SK-N-SH (cell line): ENCODE measurements at regions of chr7 and their contacts with region 1.

Region 1: GRCh38 chr7:128997181-128997580 is 57.7 kb downstream of the TNPO3 start:
- DNase-seq: no peak
- H3K4me3 ChIP-seq: no peak overlapping the region
- H3K27ac ChIP-seq: no peak overlapping the region
- H3K4me1 ChIP-seq: no peaks in the 10 kb centered on the region; a peak in 1 of 4 replicates
- H3K27me3 ChIP-seq: no peaks in the 10 kb centered on the region
- CTCF ChIP-seq: no peak
- EP300 ChIP-seq: no peak
- RAD21 ChIP-seq: no peak

Region 2: DNA sequence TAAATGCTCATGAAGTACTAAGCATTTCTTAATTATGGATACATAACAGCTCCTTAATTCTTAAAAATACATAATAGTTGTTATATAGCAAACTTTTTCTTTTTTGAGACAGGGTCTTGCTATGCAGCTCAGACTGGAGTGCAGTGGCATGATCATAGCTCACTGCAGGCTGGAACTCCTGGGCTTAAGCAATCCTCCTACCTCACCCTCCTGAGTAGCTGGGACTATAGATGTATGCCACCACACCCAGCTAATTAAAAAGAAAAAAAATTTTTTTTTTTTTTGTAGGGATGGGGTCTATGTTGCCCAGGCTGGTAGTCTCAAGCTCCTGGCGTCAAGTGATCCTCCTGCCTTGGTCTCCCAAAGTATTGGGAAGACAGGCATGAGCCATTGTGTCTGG is 28.6 kb before region 1 on chr7:
- CTCF ChIA-PET with region 1: no interaction called
- POLR2A ChIA-PET with region 1: no interaction called
- DNase-seq: no peak
- H3K4me3 ChIP-seq: no peak overlapping the region
- H3K27ac ChIP-seq: no peak overlapping the region
- H3K4me1 ChIP-seq: no peaks in the 10 kb centered on the region; a peak in 1 of 4 replicates
- H3K27me3 ChIP-seq: no peaks in the 10 kb centered on the region
- CTCF ChIP-seq: no peak
- EP300 ChIP-seq: no peak
- RAD21 ChIP-seq: no peak

Region 3: GRCh38 chr7:128982105-128982504 is 15.1 kb before region 1 on chr7:
- CTCF ChIA-PET with region 1: interaction called, 12 read pairs
- POLR2A ChIA-PET with region 1: no interaction called
- DNase-seq: no peak
- H3K4me3 ChIP-seq: no peak overlapping the region
- H3K27ac ChIP-seq: no peak overlapping the region
- H3K4me1 ChIP-seq: no peaks in the 10 kb centered on the region
- H3K27me3 ChIP-seq: no peaks in the 10 kb centered on the region
- CTCF ChIP-seq: no peak
- EP300 ChIP-seq: no peak
- RAD21 ChIP-seq: no peak

Region 4: GRCh38 chr7:129009437-129009836 is 12.3 kb after region 1 on chr7:
- CTCF ChIA-PET with region 1: interaction called, 10 read pairs
- POLR2A ChIA-PET with region 1: interaction called, 3 read pairs
- DNase-seq: no peak
- H3K4me3 ChIP-seq: no peak overlapping the region
- H3K27ac ChIP-seq: no peak overlapping the region
- H3K4me1 ChIP-seq: peaks cover 0 to 4% of the 10 kb centered on the region in 2 experiments; a peak in 1 of 4 replicates
- H3K27me3 ChIP-seq: no peaks in the 10 kb centered on the region
- CTCF ChIP-seq: no peak
- EP300 ChIP-seq: no peak
- RAD21 ChIP-seq: no peak

Region 5: DNA sequence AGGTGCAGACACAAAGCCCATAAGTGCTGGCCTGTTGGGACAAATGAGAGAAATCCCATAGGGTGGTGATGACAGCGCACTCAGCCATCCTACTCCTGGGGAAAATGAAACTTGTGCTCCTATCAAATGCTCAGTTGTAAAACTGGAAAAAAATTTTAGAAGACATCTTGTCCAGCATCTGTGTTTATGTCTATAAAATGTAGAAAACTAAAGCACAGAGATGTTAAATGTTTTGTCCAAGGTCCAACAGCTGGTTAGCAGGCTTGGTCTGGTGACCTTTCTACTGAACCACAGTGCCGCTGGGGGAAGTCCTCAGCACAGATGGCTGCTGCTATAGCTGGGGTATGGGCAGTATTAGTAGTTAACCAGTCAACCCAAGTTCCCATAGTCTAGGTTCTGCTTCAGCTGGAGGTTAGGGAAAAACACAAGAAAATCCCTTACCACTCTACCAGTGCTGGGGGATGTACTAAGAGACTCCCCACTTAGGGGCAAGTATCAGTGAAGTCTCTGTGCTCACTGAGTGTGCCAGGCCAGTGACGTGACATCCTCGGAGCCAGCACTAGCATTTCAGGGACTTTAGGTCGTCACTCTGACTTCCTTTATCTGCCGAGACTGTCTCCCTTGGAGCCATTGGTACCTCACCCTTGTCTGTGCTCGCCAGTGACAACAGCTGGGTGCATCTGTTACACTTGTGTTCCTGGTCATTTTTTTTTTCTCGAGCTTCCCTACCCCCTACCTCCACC is 149.2 kb after region 1 on chr7:
- CTCF ChIA-PET with region 1: no interaction called
- POLR2A ChIA-PET with region 1: no interaction called
- DNase-seq: no peak
- H3K4me3 ChIP-seq: no peak overlapping the region
- H3K27ac ChIP-seq: no peak overlapping the region
- H3K4me1 ChIP-seq: peaks cover 0 to 27% of the 10 kb centered on the region in 2 experiments; a peak in 2 of 4 replicates
- H3K27me3 ChIP-seq: peaks cover 23% of the 10 kb centered on the region
- CTCF ChIP-seq: no peak
- EP300 ChIP-seq: no peak
- RAD21 ChIP-seq: no peak